ENCODE measurements at regions of chr18 and their contacts with region 1.

Region 1: DNA sequence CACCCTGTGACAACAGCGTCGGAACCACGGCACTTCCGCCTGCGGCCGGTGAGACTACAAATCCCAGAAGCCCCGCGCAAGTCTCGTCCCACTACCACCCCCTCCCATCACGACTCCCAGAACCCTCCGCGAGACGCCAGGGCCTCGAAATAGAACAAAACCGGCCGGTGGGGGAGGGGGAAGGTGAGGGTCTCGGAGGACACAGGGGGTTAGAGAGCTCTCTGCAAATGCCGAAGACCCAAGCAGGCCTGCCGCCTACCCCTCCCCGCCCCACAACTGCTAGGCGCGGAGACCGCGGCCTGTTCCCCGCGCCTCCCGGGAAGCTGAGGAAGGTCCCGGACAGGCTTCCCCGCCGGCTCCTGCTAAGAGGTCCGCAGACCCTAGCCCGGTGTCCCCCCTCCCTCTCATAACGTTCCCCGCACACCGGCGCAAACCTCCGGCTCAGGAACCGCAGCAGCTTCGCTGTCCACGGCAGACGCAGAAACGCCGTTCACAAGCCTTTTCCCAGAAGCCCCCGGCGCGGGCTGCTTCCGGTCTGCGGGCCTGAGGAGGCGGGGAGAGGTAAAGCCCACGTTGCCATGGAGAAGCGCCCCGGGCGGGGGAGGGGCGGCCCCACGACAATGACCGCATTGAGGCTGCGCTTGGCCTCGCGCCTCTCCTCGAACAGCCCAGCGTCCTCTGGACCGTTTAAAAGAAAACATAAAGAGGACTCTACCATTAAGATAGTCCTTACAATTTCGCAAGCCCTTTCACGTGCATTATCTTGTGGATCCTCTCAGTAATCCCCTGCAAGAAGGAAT is at the start of gene ZNF24:
- DNase-seq: peak; percentile 94
- ATAC-seq: peak; percentile 90
- H3K4me3 Mint-ChIP-seq: peak within 1 kb of the TSS; percentile 92
- H3K27ac Mint-ChIP-seq: peak within 1 kb of the TSS; percentile 90
- H3K4me1 Mint-ChIP-seq: peaks cover 34% of the 10 kb centered on the region
- H3K27me3 Mint-ChIP-seq: no peaks in the 10 kb centered on the region
- total RNA-seq, gene ZNF24: 44.2 to 51.7 TPM

Region 2: GRCh38 chr18:35050705-35051195 is 293.4 kb before region 1 on chr18:
- CTCF ChIA-PET with region 1: no interaction called
- DNase-seq: no peak
- ATAC-seq: no peak
- H3K4me3 Mint-ChIP-seq: no peak overlapping the region
- H3K27ac Mint-ChIP-seq: peak overlapping the region; percentile 63
- H3K4me1 Mint-ChIP-seq: peaks cover 46% of the 10 kb centered on the region
- H3K27me3 Mint-ChIP-seq: no peaks in the 10 kb centered on the region

Region 3: DNA sequence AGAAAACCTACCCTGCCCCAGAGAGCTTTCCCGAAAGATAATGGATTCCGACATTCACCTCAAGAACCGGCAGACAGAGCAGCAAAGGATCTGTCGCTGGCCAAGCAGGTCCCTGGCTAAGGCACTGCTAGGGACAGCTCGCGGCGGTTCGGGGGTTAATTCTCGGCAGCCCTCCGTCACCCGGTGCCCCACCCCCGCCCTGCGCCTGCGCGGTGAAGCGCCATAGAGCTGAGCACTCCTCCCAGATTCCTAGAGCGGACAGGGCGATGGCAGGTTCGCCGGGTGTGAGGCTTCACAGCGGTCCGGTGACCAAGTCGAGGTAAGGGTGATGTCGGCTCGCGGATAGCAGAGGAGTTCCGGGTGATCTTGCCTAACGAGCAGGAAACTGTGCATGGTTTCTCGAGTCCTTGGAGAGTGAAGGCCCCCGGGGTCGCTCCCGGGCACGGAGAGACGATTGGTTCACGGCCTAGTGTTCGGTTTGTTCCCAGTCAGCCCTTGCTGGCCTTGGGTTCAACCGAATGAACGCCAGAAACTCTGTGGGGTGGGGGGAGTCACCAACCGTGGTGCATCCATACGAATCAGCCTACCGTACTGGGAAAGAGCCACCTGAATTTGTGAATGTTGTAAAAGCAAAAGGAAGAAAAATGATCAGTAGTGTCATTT is 53.9 kb before region 1 on chr18 and contains the start of gene ZSCAN30:
- CTCF ChIA-PET with region 1: interaction called, 10 read pairs
- DNase-seq: peak; percentile 97
- ATAC-seq: peak; percentile 99
- H3K4me3 Mint-ChIP-seq: peak within 1 kb of the TSS; percentile 99
- H3K27ac Mint-ChIP-seq: peak within 1 kb of the TSS; percentile 94
- H3K4me1 Mint-ChIP-seq: peaks cover 38% of the 10 kb centered on the region
- H3K27me3 Mint-ChIP-seq: no peaks in the 10 kb centered on the region
- total RNA-seq, gene ZSCAN30: 12.9 to 18.1 TPM

Measured in activated CD8-positive, alpha-beta memory T cell treated with anti-CD3 and anti-CD28 coated beads, Interleukin-2, amount 10 ng/mL, durations not matched to agents 7 days and 5 days (primary cell).